K562 (cell line): ENCODE measurements at regions of chr10 and their contacts with region 1.

Region 1: GRCh38 chr10:98041372-98042043 is 11.1 kb upstream of the CRTAC1 start:
- DNase-seq: peak; percentile 27 to 67 (median 44)
- ATAC-seq: peak; percentile 81
- H3K4me3 ChIP-seq: no peak overlapping the region
- H3K27ac ChIP-seq: no peak overlapping the region
- H3K4me1 ChIP-seq: peaks cover 0 to 5% of the 10 kb centered on the region in 2 experiments; a peak in 2 of 5 replicates
- H3K27me3 ChIP-seq: peaks cover 12 to 57% of the 10 kb centered on the region in 2 experiments; a peak in 4 of 5 replicates
- CTCF ChIP-seq: peak; percentile 64 to 70 (median 70)
- EP300 ChIP-seq: no peak
- POLR2A ChIP-seq: no peak
- RAD21 ChIP-seq: peak in 1 of 2 experiments; percentile 66; a peak in 3 of 4 replicates

Region 2: GRCh38 chr10:97903128-97904017 is 138.1 kb before region 1 on chr10:
- CTCF ChIA-PET with region 1: no interaction called
- POLR2A ChIA-PET with region 1: no interaction called
- in situ Hi-C with region 1: loop called (anchors 5 kb)
- intact Hi-C with region 1: no loop called
- DNase-seq: no peak
- ATAC-seq: no peak
- H3K4me3 ChIP-seq: no peak overlapping the region
- H3K27ac ChIP-seq: no peak overlapping the region
- H3K4me1 ChIP-seq: peaks cover 8% of the 10 kb centered on the region in 2 experiments; a peak in 4 of 5 replicates
- H3K27me3 ChIP-seq: peaks cover 26 to 62% of the 10 kb centered on the region in 2 experiments; a peak in 4 of 5 replicates
- CTCF ChIP-seq: 0 out of 6 replicates have a peak, but pooled peaks of 1 of the 3 experiments have one; percentile 12
- EP300 ChIP-seq: no peak
- POLR2A ChIP-seq: no peak
- RAD21 ChIP-seq: no peak

Region 3: GRCh38 chr10:97914837-97915211 is 126.7 kb before region 1 on chr10:
- CTCF ChIA-PET with region 1: interaction called, 9 read pairs
- POLR2A ChIA-PET with region 1: interaction called, 3 read pairs
- in situ Hi-C with region 1: no loop called
- intact Hi-C with region 1: loop called (anchors 2 kb)
- DNase-seq: peak; percentile 76 to 81 (median 78)
- ATAC-seq: peak; percentile 99
- H3K4me3 ChIP-seq: no peak overlapping the region
- H3K27ac ChIP-seq: no peak overlapping the region
- H3K4me1 ChIP-seq: peaks cover 0 to 8% of the 10 kb centered on the region in 2 experiments; a peak in 2 of 5 replicates
- H3K27me3 ChIP-seq: peaks cover 0 to 18% of the 10 kb centered on the region in 2 experiments; a peak in 2 of 5 replicates
- CTCF ChIP-seq: peak; percentile 77 to 88 (median 85)
- EP300 ChIP-seq: no peak
- POLR2A ChIP-seq: no peak
- RAD21 ChIP-seq: peak; percentile 79 to 89